ENCODE measurements at regions of chr6 and their contacts with region 1.

Region 1: GRCh38 chr6:166956444-166957086 is at the start of gene RNASET2:
- DNase-seq: peak; percentile 99
- ATAC-seq: peak; percentile 99
- total RNA-seq, gene RNASET2: 16.4 TPM

Region 2: GRCh38 chr6:166627033-166627874 is 329.3 kb before region 1 on chr6 and contains the start of gene RPS6KA2:
- intact Hi-C with region 1: loop called (anchors 10 kb)
- DNase-seq: peak; percentile 100
- ATAC-seq: peak; percentile 93
- total RNA-seq, gene RPS6KA2: 55.5 TPM

Region 3: GRCh38 chr6:166786704-166787293 is 169.8 kb before region 1 on chr6:
- intact Hi-C with region 1: loop called (anchors 2 kb)
- DNase-seq: no peak
- ATAC-seq: peak; percentile 54

Region 4: GRCh38 chr6:166999145-166999883 is 42.7 kb after region 1 on chr6 and contains the start of gene CEP43:
- intact Hi-C with region 1: loop called (anchors 2 kb)
- DNase-seq: peak; percentile 98
- ATAC-seq: peak; percentile 99
- total RNA-seq, gene CEP43: 10.8 TPM